Upper lobe of right lung (tissue), 1 donor: ENCODE measurements at regions of chr4 and their contacts with region 1.

Region 1: DNA sequence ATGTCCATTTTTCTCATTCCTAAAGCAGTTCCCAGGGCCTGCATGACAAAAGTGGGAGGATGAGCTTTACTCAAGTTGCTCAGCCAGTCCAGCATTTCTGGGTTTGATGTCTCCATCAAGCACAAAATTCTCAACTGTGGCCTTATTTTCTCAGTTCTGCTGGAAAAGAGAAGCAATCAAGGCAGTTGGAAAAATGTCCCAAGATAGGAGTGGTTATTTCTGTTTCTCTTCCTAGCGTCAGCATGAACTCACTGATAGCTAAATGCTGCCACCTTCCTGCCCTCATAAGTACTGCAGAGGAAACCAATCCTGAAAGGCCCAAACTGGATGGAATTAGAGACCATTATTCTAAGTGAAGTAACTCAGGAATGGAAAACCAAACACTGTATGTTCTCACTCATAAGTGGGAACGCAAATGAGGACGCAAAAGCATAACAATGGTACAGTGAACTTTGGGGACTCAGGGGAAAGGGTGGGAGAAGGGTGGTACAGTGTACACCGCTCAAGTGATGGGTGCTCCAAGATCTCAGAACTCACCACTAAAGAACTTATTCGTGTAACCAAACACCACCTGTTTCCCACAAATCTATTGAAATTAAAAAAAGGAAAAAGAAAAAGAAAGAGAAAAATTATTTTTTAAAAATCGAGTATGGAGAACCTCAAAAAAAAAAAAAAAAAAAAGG is 29.6 kb downstream of the ADH7 start:
- DNase-seq: no peak
- ATAC-seq: peak; percentile 90
- H3K4me3 ChIP-seq: no peak overlapping the region
- H3K27ac ChIP-seq: peak overlapping the region; percentile 69
- H3K4me1 ChIP-seq: peaks cover 21% of the 10 kb centered on the region
- H3K27me3 ChIP-seq: no peaks in the 10 kb centered on the region
- CTCF ChIP-seq: peak; percentile 96

Region 2: GRCh38 chr4:99120501-99120900 is 285.1 kb before region 1 on chr4:
- intact Hi-C with region 1: loop called (anchors 10 kb)
- DNase-seq: peak; percentile 60
- ATAC-seq: no peak
- H3K4me3 ChIP-seq: no peak overlapping the region
- H3K27ac ChIP-seq: no peak overlapping the region
- H3K4me1 ChIP-seq: no peaks in the 10 kb centered on the region
- H3K27me3 ChIP-seq: no peaks in the 10 kb centered on the region
- CTCF ChIP-seq: no peak

Region 3: DNA sequence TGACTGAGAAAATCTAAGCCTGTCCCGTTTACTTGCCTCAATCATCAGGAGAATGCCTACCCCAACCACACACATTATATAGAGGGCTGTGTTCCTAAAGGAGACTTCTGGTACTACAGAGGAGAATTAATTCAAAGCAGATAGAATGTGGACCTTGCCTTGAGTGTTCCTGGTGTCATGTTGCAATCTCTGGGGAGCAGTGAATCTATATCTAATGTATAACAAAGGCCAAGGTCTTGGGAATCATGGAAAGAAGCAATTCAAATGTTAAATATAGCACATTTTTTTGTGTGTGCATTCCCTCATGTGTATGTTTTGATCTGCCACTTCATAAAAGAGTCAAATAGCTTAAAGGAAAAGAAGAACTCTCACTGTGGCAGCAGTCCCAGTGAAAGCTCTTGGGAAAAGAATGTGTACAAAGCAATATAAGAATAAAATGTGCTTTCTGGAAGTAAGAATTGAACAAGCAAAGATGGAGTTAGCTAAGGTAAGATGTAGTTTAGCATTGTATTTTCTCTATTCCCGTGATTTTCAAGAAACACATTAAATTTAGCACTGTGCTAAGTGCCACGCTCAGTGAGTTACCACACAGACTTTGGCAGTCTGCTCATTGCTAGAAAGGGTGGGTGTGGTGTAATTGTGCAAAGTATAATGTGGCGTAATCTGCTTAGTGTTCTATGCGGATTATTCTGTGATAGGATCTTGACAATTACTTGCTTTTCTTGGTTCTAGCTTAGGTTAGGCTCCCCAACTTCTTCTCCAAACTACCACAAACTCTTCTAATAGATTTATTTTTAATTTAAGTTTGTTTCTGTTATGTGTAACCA is 200.2 kb before region 1 on chr4:
- intact Hi-C with region 1: loop called (anchors 10 kb)
- DNase-seq: no peak
- ATAC-seq: peak; percentile 84
- H3K4me3 ChIP-seq: no peak overlapping the region
- H3K27ac ChIP-seq: no peak overlapping the region
- H3K4me1 ChIP-seq: peaks cover 24% of the 10 kb centered on the region
- H3K27me3 ChIP-seq: no peaks in the 10 kb centered on the region
- CTCF ChIP-seq: no peak

Region 4: GRCh38 chr4:99310389-99310788 is 95.2 kb before region 1 on chr4:
- intact Hi-C with region 1: loop called (anchors 10 kb)
- DNase-seq: no peak
- ATAC-seq: no peak
- H3K4me3 ChIP-seq: no peak overlapping the region
- H3K27ac ChIP-seq: no peak overlapping the region
- H3K4me1 ChIP-seq: no peaks in the 10 kb centered on the region
- H3K27me3 ChIP-seq: no peaks in the 10 kb centered on the region
- CTCF ChIP-seq: no peak

Region 5: GRCh38 chr4:99504804-99505569 is 99.4 kb after region 1 on chr4:
- intact Hi-C with region 1: no loop called
- DNase-seq: no peak
- ATAC-seq: no peak
- H3K4me3 ChIP-seq: no peak overlapping the region
- H3K27ac ChIP-seq: no peak overlapping the region
- H3K4me1 ChIP-seq: no peaks in the 10 kb centered on the region
- H3K27me3 ChIP-seq: no peaks in the 10 kb centered on the region
- CTCF ChIP-seq: no peak

Region 6: DNA sequence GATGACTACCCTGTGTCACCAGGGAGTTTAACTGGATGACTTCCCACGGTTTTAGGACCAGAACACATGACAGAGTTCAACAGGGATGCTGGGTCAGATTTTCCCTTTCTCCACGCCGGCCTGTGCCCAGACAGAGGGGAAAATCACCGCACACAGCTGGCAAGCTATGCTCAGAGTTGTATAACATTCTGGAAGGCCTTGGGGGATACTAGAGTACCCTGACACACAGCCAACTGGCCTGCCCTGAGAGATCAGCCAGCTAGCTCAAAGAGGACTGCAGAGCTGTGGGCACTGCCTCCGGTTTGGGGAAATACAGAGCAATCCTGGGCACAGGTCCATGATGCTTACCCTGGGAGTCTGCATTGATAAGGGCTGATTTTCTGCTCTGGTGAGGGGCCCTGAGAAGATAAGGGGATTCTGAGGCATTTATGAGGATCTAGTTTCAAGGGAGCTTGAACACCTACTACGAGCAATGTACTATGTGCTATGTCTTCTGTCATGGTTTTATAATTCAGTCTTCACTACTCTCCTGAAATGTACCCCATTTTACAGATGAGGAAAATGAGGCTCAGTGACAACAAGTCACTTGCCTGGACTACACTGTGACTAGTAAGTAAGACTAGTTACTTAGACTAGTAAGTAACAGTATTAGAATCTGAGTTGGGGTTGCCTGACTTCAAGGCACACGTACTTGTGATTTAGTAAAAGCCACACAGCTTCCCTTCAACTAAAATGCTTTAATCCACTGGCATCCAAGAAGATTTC is 237.3 kb after region 1 on chr4:
- intact Hi-C with region 1: no loop called
- DNase-seq: no peak
- ATAC-seq: peak; percentile 47
- H3K4me3 ChIP-seq: no peak overlapping the region
- H3K27ac ChIP-seq: no peak overlapping the region
- H3K4me1 ChIP-seq: no peaks in the 10 kb centered on the region
- H3K27me3 ChIP-seq: no peaks in the 10 kb centered on the region
- CTCF ChIP-seq: no peak